Posterior vena cava (tissue), 2 donors: ENCODE measurements at regions of chr1 and their contacts with region 1.

Region 1: GRCh38 chr1:24043345-24044032 is 63.4 kb upstream of the SRSF10 start:
- DNase-seq: peak; percentile 3

Region 2: GRCh38 chr1:24085546-24085945 is 42.1 kb after region 1 on chr1:
- intact Hi-C with region 1: loop called in 1 of 2 experiments (anchors 2 kb)
- DNase-seq: no peak